ENCODE measurements at regions of chr19 and their contacts with region 1.

Region 1: DNA sequence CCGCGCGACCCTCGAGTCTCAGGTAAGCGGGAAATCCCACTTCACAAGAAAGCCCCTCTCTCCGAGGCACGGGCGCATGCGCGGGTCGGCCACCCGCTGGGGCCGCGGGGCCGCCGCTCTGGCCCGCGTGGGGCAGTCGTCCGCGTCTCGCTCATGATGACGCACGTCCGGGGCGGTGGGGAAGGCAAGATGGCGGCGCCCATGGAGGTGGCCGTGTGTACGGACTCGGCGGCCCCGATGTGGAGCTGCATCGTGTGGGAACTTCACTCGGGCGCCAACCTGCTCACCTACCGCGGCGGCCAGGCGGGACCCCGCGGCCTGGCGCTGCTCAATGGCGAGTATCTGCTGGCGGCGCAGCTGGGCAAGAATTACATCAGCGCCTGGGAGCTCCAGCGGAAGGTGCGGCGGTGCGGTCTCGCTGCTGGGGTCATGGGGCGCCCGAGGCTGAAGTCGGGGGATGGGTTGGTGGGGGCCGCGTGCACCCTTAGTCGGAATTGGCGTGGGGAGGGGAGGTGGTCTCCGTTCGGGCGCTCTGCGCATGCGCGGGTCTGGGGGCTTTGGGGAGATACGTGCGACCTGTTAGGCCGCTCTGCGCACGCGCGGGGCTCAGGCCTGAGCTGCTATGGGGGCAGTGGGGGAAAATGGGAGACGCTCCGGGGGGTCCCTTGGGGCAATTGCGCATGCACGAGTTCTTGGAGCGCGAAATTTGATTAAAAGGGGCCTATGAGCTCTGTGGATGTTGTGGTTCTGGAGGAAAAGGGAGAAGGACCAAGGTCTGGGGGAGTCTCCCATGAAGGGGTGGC is at the start of gene WDR18:
- DNase-seq: peak; percentile 27
- H3K4me3 ChIP-seq: peak within 1 kb of the TSS; percentile 97
- H3K27me3 ChIP-seq: no peaks in the 10 kb centered on the region
- CTCF ChIP-seq: no peak
- polyA plus RNA-seq, gene WDR18: 28.1 and 44.3 TPM in 2 replicates

Region 2: GRCh38 chr19:855565-856274 is 128.6 kb before region 1 on chr19:
- CTCF ChIA-PET with region 1: interaction called, 12 read pairs
- POLR2A ChIA-PET with region 1: no interaction called
- DNase-seq: no peak
- H3K4me3 ChIP-seq: no peak overlapping the region
- H3K27me3 ChIP-seq: no peaks in the 10 kb centered on the region
- CTCF ChIP-seq: no peak

Region 3: DNA sequence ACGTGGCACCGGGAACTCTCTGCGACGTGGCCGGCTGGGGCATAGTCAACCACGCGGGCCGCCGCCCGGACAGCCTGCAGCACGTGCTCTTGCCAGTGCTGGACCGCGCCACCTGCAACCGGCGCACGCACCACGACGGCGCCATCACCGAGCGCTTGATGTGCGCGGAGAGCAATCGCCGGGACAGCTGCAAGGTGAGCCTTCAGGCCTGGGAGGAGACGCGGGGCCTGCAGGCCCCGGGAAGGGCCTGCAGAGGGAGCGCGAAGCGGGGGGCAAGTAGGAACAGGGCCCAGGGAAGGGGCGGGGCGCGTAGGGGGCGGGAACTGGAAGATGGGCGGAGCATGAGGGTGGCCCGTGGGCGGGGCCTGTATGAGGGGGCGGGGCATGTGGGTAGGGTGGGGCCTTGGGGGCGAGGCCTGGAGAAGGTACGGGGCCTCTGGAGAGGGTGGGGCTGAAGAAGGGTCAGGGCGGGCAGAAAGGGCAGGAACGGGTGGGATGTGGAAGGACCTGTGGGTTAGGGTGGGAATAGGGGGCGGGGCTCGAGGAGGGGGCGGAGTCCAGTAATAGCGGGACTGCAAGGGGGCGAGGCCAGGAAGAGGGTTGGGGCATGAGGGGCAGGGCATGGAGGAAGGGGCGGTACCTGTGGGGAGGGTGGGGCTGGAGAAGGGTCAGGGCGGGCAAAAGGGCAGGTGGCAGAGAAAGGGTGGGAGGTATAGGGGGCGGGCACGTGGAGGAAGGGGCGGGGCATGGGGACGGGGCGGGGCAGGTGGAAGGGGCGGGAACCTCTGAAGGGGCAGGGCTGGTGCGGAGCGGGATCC is 122.4 kb before region 1 on chr19:
- CTCF ChIA-PET with region 1: interaction called, 13 read pairs
- POLR2A ChIA-PET with region 1: interaction called, 5 read pairs
- DNase-seq: no peak
- H3K4me3 ChIP-seq: no peak overlapping the region
- H3K27me3 ChIP-seq: no peaks in the 10 kb centered on the region
- CTCF ChIP-seq: peak; percentile 28; the same call in 1 of the 2 replicates

Region 4: DNA sequence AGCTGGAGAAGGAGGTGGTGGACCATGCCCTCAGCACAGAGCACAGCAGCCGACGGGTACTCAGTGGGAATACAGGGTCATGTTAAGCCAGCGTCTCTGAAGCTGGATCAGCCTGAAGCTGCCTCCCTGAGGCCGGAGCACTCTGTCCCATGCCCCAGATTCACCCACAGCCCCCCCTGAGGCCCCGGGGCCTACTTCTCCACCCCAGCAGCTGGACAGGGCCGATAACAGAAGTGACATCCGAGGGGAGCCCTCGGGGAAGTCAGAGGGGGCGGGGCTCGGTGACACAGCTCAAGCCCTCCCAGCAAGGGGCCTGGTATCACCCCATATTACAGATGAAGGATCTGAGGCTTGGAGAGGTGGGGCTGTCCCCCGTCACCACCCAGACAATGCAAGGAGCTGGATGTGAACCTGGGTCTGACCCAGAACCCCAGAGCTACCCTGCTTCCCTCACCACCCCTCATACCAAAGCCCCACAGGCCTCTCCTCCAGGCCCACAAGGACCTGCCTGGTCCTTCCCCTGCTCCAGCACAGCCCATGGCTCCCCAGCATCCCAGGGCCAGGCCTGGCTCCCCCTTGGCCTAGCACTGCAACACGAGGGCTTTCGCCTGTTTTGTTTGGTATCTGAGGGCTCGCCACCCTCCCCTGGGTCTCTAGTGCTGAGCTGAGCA is 77.0 kb before region 1 on chr19:
- CTCF ChIA-PET with region 1: no interaction called
- POLR2A ChIA-PET with region 1: no interaction called
- DNase-seq: no peak
- H3K4me3 ChIP-seq: no peak overlapping the region
- H3K27me3 ChIP-seq: no peaks in the 10 kb centered on the region
- CTCF ChIP-seq: no peak

Region 5: GRCh38 chr19:925526-926322 is 58.6 kb before region 1 on chr19 and contains the start of gene ARID3A:
- CTCF ChIA-PET with region 1: interaction called, 102 read pairs
- POLR2A ChIA-PET with region 1: no interaction called
- DNase-seq: peak; percentile 32
- H3K4me3 ChIP-seq: peak within 1 kb of the TSS; percentile 91
- H3K27me3 ChIP-seq: no peaks in the 10 kb centered on the region
- CTCF ChIP-seq: no peak
- polyA plus RNA-seq, gene ARID3A: 10.7 and 17.4 TPM in 2 replicates

Region 6: GRCh38 chr19:933216-933882 is 51.0 kb before region 1 on chr19:
- CTCF ChIA-PET with region 1: interaction called, 10 read pairs
- POLR2A ChIA-PET with region 1: interaction called, 3 read pairs
- DNase-seq: peak; percentile 77
- H3K4me3 ChIP-seq: peak overlapping the region; percentile 28
- H3K27me3 ChIP-seq: no peaks in the 10 kb centered on the region
- CTCF ChIP-seq: peak; percentile 18; the same call in 1 of the 2 replicates

Region 7: GRCh38 chr19:970695-971094 is 13.7 kb before region 1 on chr19:
- CTCF ChIA-PET with region 1: interaction called, 10 read pairs
- POLR2A ChIA-PET with region 1: no interaction called
- DNase-seq: no peak
- H3K4me3 ChIP-seq: no peak overlapping the region
- H3K27me3 ChIP-seq: no peaks in the 10 kb centered on the region
- CTCF ChIP-seq: peak; percentile 74

Measured in BJ (cell line).